Activated B cell treated with CpG ODN at 0.5 μM for 24 hours (primary cell): ENCODE measurements at regions of chr19 and their contacts with region 1.

Region 1: GRCh38 chr19:48637170-48637947 is at the start of gene DBP:
- DNase-seq: peak; percentile 97
- ATAC-seq: peak; percentile 72
- H3K4me3 Mint-ChIP-seq: peak within 1 kb of the TSS; percentile 93
- H3K27ac Mint-ChIP-seq: peak within 1 kb of the TSS; percentile 99
- H3K4me1 Mint-ChIP-seq: peaks cover 68% of the 10 kb centered on the region
- H3K27me3 Mint-ChIP-seq: no peaks in the 10 kb centered on the region
- CTCF ChIP-seq: no peak
- total RNA-seq, gene DBP: 8.7 and 9.2 TPM in 2 replicates

Region 2: DNA sequence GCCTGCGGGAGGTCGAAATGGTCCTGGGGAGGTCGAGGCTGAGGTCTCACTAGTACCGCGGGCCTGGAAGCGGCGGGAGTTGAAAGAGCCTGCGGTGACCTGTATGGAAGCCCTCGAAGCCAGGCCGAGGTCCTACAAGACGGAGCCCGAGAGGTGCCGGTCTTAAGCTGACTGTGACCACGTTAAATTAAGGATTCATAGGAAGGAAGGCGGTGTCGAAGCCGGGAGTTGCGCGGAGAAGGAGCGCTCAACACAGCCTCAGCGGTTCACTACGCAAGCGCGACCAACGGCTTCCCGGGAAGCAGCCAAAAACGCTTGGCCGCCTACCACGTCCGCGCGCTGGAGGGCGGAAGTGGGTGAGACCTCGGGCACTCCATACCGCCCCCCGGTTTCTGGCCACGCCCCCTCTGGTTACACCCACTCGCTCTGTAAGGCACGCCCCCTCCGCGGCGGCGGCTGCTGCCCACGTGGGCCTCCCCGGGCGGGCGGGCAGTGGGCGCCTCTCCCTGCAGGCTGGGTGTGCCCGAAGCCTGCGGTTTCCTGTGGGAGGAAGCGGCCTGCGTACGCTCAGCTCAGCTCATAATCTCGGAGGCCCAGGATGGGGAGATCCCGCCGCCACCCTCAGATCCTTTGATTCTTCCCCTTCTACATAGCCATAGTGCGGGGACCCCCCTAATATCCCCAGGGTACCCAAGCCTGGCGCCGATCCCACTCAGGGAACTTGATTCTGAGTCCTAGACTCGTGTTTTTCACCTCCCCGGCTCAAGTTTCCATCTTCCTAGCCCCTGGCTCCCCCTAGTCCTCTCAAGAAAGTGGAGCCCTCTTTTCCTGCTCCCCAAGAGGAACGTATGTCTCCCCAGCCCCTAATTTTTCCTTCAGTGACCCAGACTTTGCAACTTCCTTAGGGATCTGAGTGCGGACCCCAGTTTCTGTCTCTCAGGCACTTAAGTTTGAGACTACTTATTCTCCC is 315.5 kb before region 1 on chr19:
- CTCF ChIA-PET with region 1: no interaction called
- POLR2A ChIA-PET with region 1: interaction called, 4 read pairs
- intact Hi-C with region 1: loop called (anchors 5 kb)
- DNase-seq: peak; percentile 99
- ATAC-seq: peak; percentile 66
- H3K4me3 Mint-ChIP-seq: peak overlapping the region; percentile 94
- H3K27ac Mint-ChIP-seq: peak overlapping the region; percentile 99
- H3K4me1 Mint-ChIP-seq: peaks cover 63% of the 10 kb centered on the region
- H3K27me3 Mint-ChIP-seq: no peaks in the 10 kb centered on the region
- CTCF ChIP-seq: no peak

Region 3: DNA sequence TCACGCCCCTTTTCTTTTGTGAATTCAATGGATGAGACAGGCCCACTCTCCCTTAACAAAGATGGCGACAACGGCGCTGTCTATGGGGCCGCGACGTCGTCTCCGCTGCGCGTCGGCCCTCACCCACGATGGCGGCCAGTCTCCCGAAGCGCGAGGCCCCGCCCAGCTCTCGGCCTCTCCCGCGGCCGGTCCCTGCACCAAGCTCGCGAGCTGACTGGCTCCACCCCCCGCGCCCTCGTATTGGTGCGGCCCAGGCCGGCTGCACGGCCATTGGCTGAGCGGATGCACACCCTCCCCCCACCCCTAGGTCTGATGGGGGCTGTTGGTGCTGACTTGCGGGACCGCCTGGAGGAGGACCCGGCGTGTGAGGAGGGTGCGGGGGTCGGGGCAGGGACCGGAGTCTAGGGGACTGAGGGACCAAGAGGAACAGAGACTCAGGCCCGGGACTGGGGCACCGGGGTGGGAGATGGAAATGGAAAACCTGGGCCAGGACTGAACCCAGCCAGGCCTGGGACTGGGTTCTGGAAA is 13.2 kb before region 1 on chr19:
- CTCF ChIA-PET with region 1: interaction called, 6 read pairs
- POLR2A ChIA-PET with region 1: interaction called, 67 read pairs
- intact Hi-C with region 1: loop called (anchors 1 kb)
- DNase-seq: peak; percentile 95
- ATAC-seq: peak; percentile 80
- H3K4me3 Mint-ChIP-seq: peak overlapping the region; percentile 86
- H3K27ac Mint-ChIP-seq: peak overlapping the region; percentile 90
- H3K4me1 Mint-ChIP-seq: peaks cover 44% of the 10 kb centered on the region
- H3K27me3 Mint-ChIP-seq: no peaks in the 10 kb centered on the region
- CTCF ChIP-seq: no peak

Region 4: DNA sequence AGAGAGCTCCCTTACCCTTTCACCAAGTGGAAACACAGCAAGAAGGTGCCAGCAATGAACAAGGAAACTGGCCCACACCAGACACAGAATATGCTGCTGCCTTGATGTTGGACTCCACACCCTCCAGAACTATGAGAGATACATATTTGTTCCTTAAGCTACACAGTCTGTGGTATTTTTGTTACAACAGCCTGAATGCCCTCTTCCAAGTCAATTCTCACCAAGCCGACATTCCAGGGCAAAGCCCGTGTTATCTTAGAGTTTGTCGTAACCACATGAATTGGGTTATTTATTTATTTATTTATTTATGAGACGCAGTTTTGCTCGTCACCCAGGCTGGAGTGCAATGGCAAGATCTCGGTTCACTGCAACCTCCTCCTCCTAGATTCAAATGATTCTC is 132.9 kb after region 1 on chr19:
- CTCF ChIA-PET with region 1: no interaction called
- POLR2A ChIA-PET with region 1: no interaction called
- intact Hi-C with region 1: no loop called
- DNase-seq: no peak
- ATAC-seq: no peak
- H3K4me3 Mint-ChIP-seq: no peak overlapping the region
- H3K27ac Mint-ChIP-seq: no peak overlapping the region
- H3K4me1 Mint-ChIP-seq: no peaks in the 10 kb centered on the region
- H3K27me3 Mint-ChIP-seq: peaks cover 27% of the 10 kb centered on the region
- CTCF ChIP-seq: no peak

Region 5: GRCh38 chr19:48812094-48812929 is 175.0 kb after region 1 on chr19:
- CTCF ChIA-PET with region 1: no interaction called
- POLR2A ChIA-PET with region 1: no interaction called
- intact Hi-C with region 1: loop called (anchors 1 kb)
- DNase-seq: peak; percentile 74
- ATAC-seq: peak; percentile 77
- H3K4me3 Mint-ChIP-seq: peak overlapping the region; percentile 88
- H3K27ac Mint-ChIP-seq: peak overlapping the region; percentile 91
- H3K4me1 Mint-ChIP-seq: peaks cover 29% of the 10 kb centered on the region
- H3K27me3 Mint-ChIP-seq: no peaks in the 10 kb centered on the region
- CTCF ChIP-seq: no peak

Region 6: DNA sequence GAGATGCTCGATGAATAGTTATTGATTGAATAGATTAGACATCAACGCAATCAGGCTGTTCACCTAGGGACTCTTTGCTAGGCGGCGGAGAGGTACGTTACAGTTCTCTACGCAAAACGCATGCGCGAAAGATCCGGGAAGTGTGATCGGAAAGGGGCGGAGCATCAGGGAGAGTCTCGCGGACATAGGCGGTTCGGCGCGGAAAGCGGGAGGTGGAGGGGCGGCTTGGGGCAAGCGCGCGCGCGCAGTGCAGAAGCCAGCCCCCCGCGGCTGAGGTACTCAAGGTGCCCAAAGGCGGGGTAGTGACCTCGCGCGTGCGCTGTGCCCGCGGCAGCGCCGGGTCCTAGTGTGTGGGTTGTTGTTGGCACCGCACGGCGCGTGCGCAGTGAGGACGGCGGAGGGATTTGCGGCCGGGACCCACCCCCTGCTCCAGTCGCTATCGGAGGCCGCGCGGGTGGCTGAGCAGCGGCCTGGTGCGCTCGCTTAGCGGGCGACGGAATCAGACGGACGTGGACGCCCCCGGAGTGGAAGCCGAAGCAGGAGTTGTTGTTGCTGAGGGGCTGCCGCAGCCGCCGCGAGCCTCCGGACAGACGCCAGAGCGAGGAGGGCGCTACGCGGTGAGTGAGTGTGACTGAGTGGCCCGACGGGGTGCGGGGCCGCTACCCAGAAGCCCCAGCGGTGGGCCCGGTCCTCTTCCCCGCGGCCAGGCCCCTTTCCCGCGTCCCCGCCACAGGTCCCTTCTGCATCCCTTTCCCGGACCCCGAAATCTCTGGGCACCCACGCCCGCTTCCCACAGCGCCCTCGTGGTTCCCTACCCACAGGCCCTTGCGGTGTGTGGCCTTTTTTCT is 447.9 kb after region 1 on chr19 and contains the start of gene SNRNP70:
- CTCF ChIA-PET with region 1: no interaction called
- POLR2A ChIA-PET with region 1: no interaction called
- intact Hi-C with region 1: loop called (anchors 1 kb)
- DNase-seq: peak; percentile 99
- ATAC-seq: peak; percentile 97
- H3K4me3 Mint-ChIP-seq: peak within 1 kb of the TSS; percentile 93
- H3K27ac Mint-ChIP-seq: peak within 1 kb of the TSS; percentile 93
- H3K4me1 Mint-ChIP-seq: peaks cover 41% of the 10 kb centered on the region
- H3K27me3 Mint-ChIP-seq: peaks cover 6% of the 10 kb centered on the region
- CTCF ChIP-seq: no peak
- total RNA-seq, gene SNRNP70: 268 and 298 TPM in 2 replicates

Region 7: GRCh38 chr19:49640113-49640898 is 1002.9 kb after region 1 on chr19 and contains the start of gene RRAS:
- CTCF ChIA-PET with region 1: no interaction called
- POLR2A ChIA-PET with region 1: no interaction called
- intact Hi-C with region 1: loop called (anchors 5 kb)
- DNase-seq: peak; percentile 97
- ATAC-seq: peak; percentile 69
- H3K4me3 Mint-ChIP-seq: peak within 1 kb of the TSS; percentile 93
- H3K27ac Mint-ChIP-seq: peak within 1 kb of the TSS; percentile 96
- H3K4me1 Mint-ChIP-seq: peaks cover 59% of the 10 kb centered on the region
- H3K27me3 Mint-ChIP-seq: no peaks in the 10 kb centered on the region
- CTCF ChIP-seq: no peak
- total RNA-seq, gene RRAS: 4.8 and 5.1 TPM in 2 replicates